PC-9 (cell line): ENCODE measurements at regions of chr20 and their contacts with region 1.

Region 1: GRCh38 chr20:50165684-50166554 is 12.4 kb upstream of the PEDS1 start:
- DNase-seq: peak; percentile 98 to 100
- H3K4me3 ChIP-seq: peak overlapping the region; percentile 52
- H3K27ac ChIP-seq: peak overlapping the region; percentile 81
- H3K4me1 ChIP-seq: peaks cover 45% of the 10 kb centered on the region
- H3K27me3 ChIP-seq: no peaks in the 10 kb centered on the region
- CTCF ChIP-seq: 0 out of 2 replicates have a peak, but pooled peaks have one; percentile 14

Region 2: GRCh38 chr20:49562311-49563014 is 603.5 kb before region 1 on chr20:
- CTCF ChIA-PET with region 1: no interaction called
- POLR2A ChIA-PET with region 1: no interaction called
- intact Hi-C with region 1: loop called (anchors 10 kb)
- DNase-seq: peak; percentile 86 to 92
- H3K4me3 ChIP-seq: peak overlapping the region; percentile 22; the same call in 1 of the 2 replicates
- H3K27ac ChIP-seq: peak overlapping the region; percentile 71
- H3K4me1 ChIP-seq: peaks cover 77% of the 10 kb centered on the region
- H3K27me3 ChIP-seq: no peaks in the 10 kb centered on the region
- CTCF ChIP-seq: no peak

Region 3: GRCh38 chr20:49964964-49965780 is 200.7 kb before region 1 on chr20:
- CTCF ChIA-PET with region 1: no interaction called
- POLR2A ChIA-PET with region 1: no interaction called
- intact Hi-C with region 1: loop called (anchors 5 kb)
- DNase-seq: peak; percentile 52 to 54
- H3K4me3 ChIP-seq: no peak overlapping the region
- H3K27ac ChIP-seq: no peak overlapping the region
- H3K4me1 ChIP-seq: peaks cover 25% of the 10 kb centered on the region
- H3K27me3 ChIP-seq: no peaks in the 10 kb centered on the region
- CTCF ChIP-seq: peak; percentile 76

Region 4: DNA sequence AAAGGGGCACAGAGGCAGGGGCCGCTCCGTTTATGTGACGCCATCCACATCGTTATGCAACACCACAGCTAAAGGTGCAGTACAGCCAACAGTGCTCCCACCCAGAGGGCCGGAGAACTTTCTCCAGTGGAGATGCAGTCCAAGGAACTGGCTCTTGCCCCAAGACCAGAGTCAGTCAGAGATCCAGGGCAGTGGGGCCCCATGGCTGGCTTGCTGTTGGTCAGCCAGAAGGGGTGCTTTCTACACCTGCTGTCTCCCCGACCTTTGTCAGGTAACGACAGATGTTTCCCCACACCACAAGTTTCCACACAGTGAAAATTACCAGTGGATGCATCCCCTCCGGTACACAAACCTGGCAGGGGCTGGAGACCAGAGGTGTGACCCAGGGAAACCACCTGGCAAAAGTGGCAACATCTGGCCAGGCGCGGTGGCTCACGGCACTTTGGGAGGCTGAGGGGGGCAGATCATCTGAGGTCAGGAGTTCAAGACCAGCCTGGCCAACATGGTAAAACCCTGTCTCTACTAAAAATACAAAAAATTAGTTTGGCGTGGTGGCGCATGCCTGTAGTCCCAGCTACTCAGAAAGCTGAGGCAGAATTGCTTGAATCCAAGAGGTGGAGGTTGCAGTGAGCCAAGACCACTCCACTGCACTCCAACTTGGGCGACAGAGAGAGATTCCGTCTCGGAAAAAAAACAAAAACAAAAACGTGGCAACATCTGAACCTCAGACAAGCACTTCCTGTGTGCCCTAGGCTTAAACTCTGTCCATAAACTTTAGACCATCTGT is 87.9 kb before region 1 on chr20:
- CTCF ChIA-PET with region 1: interaction called, 13 read pairs
- POLR2A ChIA-PET with region 1: interaction called, 5 read pairs
- intact Hi-C with region 1: no loop called
- DNase-seq: no peak
- H3K4me3 ChIP-seq: no peak overlapping the region
- H3K27ac ChIP-seq: no peak overlapping the region
- H3K4me1 ChIP-seq: peaks cover 7% of the 10 kb centered on the region
- H3K27me3 ChIP-seq: no peaks in the 10 kb centered on the region
- CTCF ChIP-seq: no peak

Region 5: DNA sequence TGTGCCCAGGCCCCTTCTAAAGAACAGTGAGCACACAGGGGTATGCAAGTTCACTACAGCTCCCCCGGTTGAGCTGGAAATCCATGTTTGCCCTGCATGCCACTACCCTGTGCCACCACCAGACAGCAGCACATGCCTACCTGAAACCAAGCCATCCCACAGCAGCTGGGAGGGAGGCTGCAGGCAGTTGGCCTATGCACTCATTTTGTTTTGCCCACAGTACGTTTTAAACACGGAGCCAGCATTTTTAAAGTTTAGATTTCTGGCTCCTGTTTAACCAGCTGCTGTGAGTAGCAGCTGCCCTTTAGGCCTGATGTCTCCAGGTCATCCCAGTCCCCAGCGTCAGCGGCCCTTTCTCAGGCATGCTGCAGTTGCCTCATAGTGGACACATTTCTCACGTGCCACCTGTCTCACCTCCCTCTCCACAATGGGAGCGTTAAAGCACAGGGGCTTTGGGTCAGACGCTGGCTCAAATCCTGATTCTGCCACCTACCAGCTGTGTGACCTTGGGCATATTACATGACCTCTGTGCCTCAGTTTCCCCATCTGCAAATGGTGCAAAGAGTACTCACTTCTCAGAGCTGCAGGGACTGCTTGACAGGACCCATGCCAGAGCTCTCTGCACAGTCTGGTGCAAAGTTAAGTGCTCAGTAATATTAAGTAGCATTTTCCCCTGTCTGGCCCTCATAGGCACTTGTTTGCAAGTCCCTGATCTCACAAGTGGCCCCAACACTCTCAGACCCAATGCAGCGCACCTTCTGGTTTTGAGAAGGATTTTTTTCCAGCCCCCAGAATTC is 44.8 kb before region 1 on chr20:
- CTCF ChIA-PET with region 1: interaction called, 18 read pairs
- POLR2A ChIA-PET with region 1: no interaction called
- intact Hi-C with region 1: loop called (anchors 1 kb)
- DNase-seq: peak; percentile 66 to 72
- H3K4me3 ChIP-seq: no peak overlapping the region
- H3K27ac ChIP-seq: no peak overlapping the region
- H3K4me1 ChIP-seq: peaks cover 11% of the 10 kb centered on the region
- H3K27me3 ChIP-seq: no peaks in the 10 kb centered on the region
- CTCF ChIP-seq: peak; percentile 90

Region 6: GRCh38 chr20:50323777-50324775 is 158.2 kb after region 1 on chr20:
- CTCF ChIA-PET with region 1: no interaction called
- POLR2A ChIA-PET with region 1: no interaction called
- intact Hi-C with region 1: no loop called
- DNase-seq: no peak
- H3K4me3 ChIP-seq: no peak overlapping the region
- H3K27ac ChIP-seq: no peak overlapping the region
- H3K4me1 ChIP-seq: peaks cover 30% of the 10 kb centered on the region
- H3K27me3 ChIP-seq: no peaks in the 10 kb centered on the region
- CTCF ChIP-seq: no peak